CD14-positive monocyte (primary cell): ENCODE measurements at regions of chr13 and their contacts with region 1.

Region 1: GRCh38 chr13:49652355-49653305 is 24.3 kb downstream of the ARL11 start:
- DNase-seq: peak; percentile 25 to 48 (median 47)
- H3K4me3 ChIP-seq: no peak overlapping the region
- H3K4me3 Mint-ChIP-seq: no peak overlapping the region
- H3K27ac ChIP-seq: no peak overlapping the region
- H3K27ac Mint-ChIP-seq: no peak overlapping the region
- H3K4me1 ChIP-seq: no peaks in the 10 kb centered on the region
- H3K4me1 Mint-ChIP-seq: peaks cover 5% of the 10 kb centered on the region
- H3K27me3 ChIP-seq: no peaks in the 10 kb centered on the region
- H3K27me3 Mint-ChIP-seq: peaks cover 0 to 2% (median 2%) of the 10 kb centered on the region in 3 donors
- CTCF ChIP-seq: peak; percentile 72

Region 2: DNA sequence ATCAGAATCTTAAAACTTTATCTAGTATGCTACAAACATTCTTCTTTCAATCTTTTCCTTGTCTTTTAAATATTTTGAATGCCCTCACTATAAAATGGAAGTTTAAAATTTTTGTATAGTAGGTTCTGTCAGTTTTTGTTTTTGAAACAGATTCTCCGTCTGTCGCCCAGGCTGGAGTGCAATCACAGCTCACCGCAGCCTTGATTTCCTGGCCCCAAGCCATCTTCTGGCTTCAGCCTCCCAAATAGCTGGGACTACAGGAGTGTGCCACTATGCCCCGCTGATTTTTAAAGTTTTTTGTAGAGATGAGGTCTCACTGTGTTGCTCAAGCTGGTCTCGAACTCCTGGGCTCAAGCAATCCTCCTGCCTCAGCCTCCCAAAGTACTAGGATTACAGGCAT is 136.2 kb before region 1 on chr13:
- intact Hi-C with region 1: no loop called
- DNase-seq: no peak
- H3K4me3 ChIP-seq: no peak overlapping the region
- H3K4me3 Mint-ChIP-seq: no peak overlapping the region
- H3K27ac ChIP-seq: no peak overlapping the region
- H3K27ac Mint-ChIP-seq: peak overlapping the region in 2 of 7 donors; percentile 43 to 49
- H3K4me1 ChIP-seq: no peaks in the 10 kb centered on the region
- H3K4me1 Mint-ChIP-seq: no peaks in the 10 kb centered on the region
- H3K27me3 ChIP-seq: no peaks in the 10 kb centered on the region
- H3K27me3 Mint-ChIP-seq: peaks cover 0 to 2% (median 2%) of the 10 kb centered on the region in 3 donors
- CTCF ChIP-seq: no peak

Region 3: DNA sequence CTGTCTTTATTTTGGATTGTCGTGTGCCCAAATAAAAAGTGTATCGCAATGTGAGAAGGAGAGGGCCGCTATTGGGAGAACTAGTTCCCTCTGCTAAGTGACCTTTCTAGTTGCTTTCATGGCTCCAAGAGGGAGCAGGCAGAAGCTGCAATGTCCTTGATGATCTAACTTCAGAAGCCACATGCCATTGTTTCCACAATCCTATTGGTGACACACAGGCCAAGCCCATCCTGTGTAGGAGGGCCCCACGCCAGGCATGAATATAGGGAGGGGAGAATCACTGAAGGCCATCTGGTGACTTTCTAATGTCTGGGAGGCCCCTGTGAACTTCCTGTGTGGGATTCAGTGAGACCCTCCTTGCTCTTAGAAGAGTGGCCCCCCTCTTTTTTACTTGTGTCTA is 187.6 kb after region 1 on chr13:
- intact Hi-C with region 1: loop called (anchors 10 kb)
- DNase-seq: peak in 2 of 3 donors; percentile 6 to 42
- H3K4me3 ChIP-seq: no peak overlapping the region
- H3K4me3 Mint-ChIP-seq: no peak overlapping the region
- H3K27ac ChIP-seq: no peak overlapping the region
- H3K27ac Mint-ChIP-seq: no peak overlapping the region
- H3K4me1 ChIP-seq: peaks cover 0 to 8% of the 10 kb centered on the region in 2 donors
- H3K4me1 Mint-ChIP-seq: peaks cover 9% of the 10 kb centered on the region
- H3K27me3 ChIP-seq: no peaks in the 10 kb centered on the region
- H3K27me3 Mint-ChIP-seq: peaks cover 0 to 4% (median 4%) of the 10 kb centered on the region in 3 donors
- CTCF ChIP-seq: no peak